Posterior vena cava (tissue), 2 donors: ENCODE measurements at regions of chr2 and their contacts with region 1.

Region 1: DNA sequence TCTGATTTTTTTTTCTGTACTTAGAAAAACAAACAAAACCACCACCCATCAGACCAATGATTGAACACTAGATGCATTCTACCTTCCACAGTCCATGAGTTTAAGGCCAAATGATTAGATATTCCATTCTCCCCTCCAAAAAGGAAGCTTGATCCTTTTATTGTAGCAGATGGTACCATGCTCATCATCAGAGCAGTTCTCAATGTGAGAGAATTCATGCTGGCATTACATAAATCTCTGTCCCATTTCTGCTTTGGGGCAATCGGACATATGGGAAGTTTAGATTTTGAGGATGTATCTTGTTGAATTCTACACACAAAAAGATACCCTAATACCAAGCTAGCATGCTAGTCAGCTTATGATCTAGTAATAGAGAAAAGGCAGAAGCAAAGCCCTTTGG is 186.6 kb downstream of the RAD51AP2 start:
- DNase-seq: no peak

Region 2: DNA sequence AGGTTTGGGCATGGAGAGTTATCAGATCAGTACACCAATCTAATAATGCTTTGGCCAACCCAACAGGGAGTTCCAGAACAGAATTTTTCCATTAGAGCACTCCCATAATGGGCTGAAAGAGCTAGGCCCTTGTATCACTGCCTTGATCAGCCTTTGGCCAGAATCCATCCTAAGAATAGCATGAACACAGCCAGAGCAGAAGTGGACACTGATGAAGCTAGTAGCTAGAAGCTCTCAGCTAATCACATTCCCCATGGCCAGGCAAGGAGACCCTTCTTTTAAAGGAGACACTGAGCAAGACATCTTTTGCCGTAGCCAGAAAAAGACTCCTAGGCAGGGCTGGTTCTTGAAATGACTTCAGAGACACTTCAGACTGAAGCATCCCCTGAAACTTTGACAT is 49.4 kb before region 1 on chr2:
- intact Hi-C with region 1: loop called in 1 of 2 experiments (anchors 1 kb)
- DNase-seq: no peak

Region 3: DNA sequence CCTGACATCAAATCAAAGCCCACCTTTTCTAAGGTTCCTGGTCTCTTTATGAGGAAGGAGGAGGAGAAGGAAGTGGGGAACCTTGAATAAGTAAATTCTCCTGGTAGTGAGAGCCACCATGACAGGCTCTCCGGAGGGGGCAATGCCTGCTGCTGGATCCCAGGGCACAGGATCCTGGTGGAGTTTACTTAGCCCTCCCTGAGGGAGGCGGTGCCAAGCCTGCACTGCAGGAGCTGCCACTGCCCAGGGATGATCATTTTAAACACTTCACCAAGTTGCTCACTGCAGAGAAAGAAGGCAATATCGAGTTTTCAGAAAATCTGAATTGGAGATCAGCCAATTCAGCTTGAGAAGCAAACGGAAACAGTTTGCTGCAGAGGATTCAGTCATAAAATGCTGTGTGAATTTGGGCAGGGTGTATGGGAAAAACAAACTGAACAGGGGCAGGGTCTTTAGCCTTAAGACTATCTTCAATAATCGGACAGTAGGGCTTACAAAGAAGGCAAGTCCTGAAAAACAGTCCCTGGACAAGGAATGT is 14.1 kb before region 1 on chr2:
- intact Hi-C with region 1: no loop called
- DNase-seq: no peak

Region 4: DNA sequence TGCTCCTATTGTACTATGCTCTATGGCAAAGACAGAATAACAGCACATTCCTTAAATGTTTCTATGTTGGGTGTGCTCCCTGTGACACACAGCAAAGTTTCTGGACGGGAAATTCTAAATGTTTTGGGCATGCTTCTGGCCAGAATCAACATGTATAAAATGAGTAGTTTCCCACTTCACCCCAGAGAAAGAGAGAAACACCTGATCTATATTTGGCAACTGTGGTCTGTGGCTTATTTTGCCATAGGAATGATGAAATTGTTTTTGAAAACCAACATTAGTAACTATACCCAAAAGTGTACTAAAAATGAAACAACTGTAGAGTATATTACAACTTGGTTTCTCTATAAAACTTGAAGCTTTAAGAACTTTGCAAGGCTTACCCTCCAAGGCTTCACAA is 97.5 kb after region 1 on chr2:
- intact Hi-C with region 1: no loop called
- DNase-seq: no peak